BJ (cell line): ENCODE measurements at regions of chr1 and their contacts with region 1.

Region 1: DNA sequence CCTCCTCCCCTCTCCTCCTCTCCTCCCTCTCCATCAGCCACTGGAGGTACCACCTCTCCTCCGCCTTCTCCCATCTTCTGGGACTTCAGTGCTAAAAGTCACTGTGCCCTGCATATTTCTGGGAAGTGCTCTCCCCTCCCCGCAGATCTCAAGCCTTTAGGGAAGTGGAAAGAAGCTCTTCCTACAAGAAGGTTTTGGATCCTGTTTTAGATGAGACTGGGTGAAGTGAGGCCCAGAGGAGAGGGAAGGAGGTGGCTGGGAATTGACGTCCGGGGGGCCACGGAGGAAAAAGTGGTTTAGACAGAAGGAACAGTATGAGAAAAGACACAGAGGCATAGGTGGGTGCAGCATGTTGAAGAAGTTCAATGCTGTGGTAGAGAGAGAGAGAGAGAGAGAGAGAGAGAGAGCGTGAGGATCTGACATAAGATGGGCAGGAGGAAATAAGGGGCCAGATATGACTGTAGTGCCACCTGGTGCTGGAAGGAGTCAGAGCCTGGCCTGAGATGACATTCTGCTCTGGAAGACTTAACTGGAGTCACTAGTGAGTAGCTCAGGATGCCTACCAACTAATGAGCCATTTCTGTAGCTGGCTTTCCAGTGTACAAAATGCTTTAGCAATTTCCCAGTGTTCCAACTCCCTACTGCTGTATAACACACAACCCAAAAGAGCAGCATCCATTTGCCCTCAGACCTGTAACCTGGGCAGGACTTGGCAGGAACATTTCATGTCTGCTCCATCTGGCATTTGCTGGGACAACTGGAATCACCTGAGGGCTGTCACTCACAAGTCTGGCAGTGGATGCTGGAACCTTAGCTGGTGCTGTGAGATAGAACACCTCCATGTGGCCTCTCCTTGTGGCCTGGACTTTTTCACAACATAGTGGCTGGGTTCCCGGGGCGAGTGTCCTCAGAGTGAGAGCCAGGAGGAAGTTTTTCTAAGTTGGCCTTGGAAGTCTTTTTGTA is 16.6 kb upstream of the ZSCAN20 start:
- DNase-seq: peak; percentile 56
- H3K4me3 ChIP-seq: no peak overlapping the region
- H3K27me3 ChIP-seq: no peaks in the 10 kb centered on the region
- CTCF ChIP-seq: peak; percentile 88

Region 2: GRCh38 chr1:33374336-33375105 is 81.3 kb before region 1 on chr1:
- CTCF ChIA-PET with region 1: interaction called, 47 read pairs
- POLR2A ChIA-PET with region 1: no interaction called
- DNase-seq: no peak
- H3K4me3 ChIP-seq: no peak overlapping the region
- H3K27me3 ChIP-seq: no peaks in the 10 kb centered on the region
- CTCF ChIP-seq: no peak

Region 3: GRCh38 chr1:33433509-33434362 is 22.1 kb before region 1 on chr1:
- CTCF ChIA-PET with region 1: interaction called, 20 read pairs
- POLR2A ChIA-PET with region 1: no interaction called
- DNase-seq: peak; percentile 100
- H3K4me3 ChIP-seq: no peak overlapping the region
- H3K27me3 ChIP-seq: no peaks in the 10 kb centered on the region
- CTCF ChIP-seq: no peak

Region 4: DNA sequence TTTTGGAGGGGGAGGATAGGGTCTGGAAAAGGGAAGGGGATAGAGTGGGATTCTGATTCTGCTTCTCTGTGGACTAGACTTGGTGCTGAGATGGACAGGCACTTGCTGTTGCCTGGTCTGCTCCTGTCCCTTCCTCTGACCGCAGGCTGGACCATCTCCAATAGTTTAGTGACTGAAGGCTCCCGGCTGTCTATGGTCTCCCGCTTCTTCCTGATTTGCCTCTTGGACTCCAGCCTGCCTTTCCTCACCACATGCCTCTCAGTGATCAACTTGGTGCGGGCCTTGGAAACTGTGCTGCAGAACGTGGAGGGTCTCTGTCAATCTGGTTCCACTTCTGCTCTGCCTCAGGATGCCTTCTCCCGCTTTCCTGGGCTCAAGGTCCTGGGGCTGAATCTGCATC is 10.3 kb after region 1 on chr1:
- CTCF ChIA-PET with region 1: interaction called, 44 read pairs
- POLR2A ChIA-PET with region 1: no interaction called
- DNase-seq: no peak
- H3K4me3 ChIP-seq: no peak overlapping the region
- H3K27me3 ChIP-seq: no peaks in the 10 kb centered on the region
- CTCF ChIP-seq: no peak

Region 5: GRCh38 chr1:33488633-33489032 is 32.8 kb after region 1 on chr1:
- CTCF ChIA-PET with region 1: no interaction called
- POLR2A ChIA-PET with region 1: no interaction called
- DNase-seq: no peak
- H3K4me3 ChIP-seq: no peak overlapping the region
- H3K27me3 ChIP-seq: no peaks in the 10 kb centered on the region
- CTCF ChIP-seq: no peak

Region 6: GRCh38 chr1:33532936-33533335 is 77.1 kb after region 1 on chr1:
- CTCF ChIA-PET with region 1: no interaction called
- POLR2A ChIA-PET with region 1: no interaction called
- DNase-seq: no peak
- H3K4me3 ChIP-seq: no peak overlapping the region
- H3K27me3 ChIP-seq: no peaks in the 10 kb centered on the region
- CTCF ChIP-seq: no peak

Region 7: DNA sequence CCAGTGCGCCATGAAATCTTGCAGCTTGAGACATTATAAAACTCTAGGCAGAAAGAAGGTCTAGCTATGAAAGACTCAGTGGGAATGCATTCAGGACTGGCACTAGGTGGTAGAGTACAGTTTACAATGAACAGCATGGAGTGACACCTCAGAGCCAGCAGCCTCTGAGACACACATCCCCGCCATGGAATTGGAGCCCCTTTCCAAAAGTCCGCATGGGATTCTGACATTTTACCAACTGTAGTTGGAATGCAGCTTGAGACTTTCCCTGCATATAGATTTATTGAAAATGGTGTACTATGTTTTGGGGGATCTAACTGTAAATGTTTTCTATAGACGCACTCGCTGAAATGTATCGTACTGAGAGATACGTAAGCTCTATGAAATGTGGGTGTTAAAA is 132.9 kb after region 1 on chr1:
- CTCF ChIA-PET with region 1: no interaction called
- POLR2A ChIA-PET with region 1: no interaction called
- DNase-seq: no peak
- H3K4me3 ChIP-seq: no peak overlapping the region
- H3K27me3 ChIP-seq: no peaks in the 10 kb centered on the region
- CTCF ChIP-seq: no peak